Activated CD8-positive, alpha-beta T cell treated with anti-CD3 and anti-CD28 coated beads for 36 hours (primary cell): ENCODE measurements at regions of chr1 and their contacts with region 1.

Region 1: GRCh38 chr1:182301467-182302198 is 90.0 kb downstream of the GLUL start:
- DNase-seq: peak; percentile 52
- ATAC-seq: peak; percentile 47
- H3K4me3 Mint-ChIP-seq: no peak overlapping the region
- H3K27ac Mint-ChIP-seq: peak overlapping the region; percentile 77
- H3K4me1 Mint-ChIP-seq: peaks cover 26% of the 10 kb centered on the region
- H3K27me3 Mint-ChIP-seq: no peaks in the 10 kb centered on the region
- CTCF ChIP-seq: no peak

Region 2: GRCh38 chr1:182268669-182269068 is 33.0 kb before region 1 on chr1:
- CTCF ChIA-PET with region 1: no interaction called
- POLR2A ChIA-PET with region 1: no interaction called
- intact Hi-C with region 1: no loop called
- DNase-seq: no peak
- ATAC-seq: no peak
- H3K4me3 Mint-ChIP-seq: no peak overlapping the region
- H3K27ac Mint-ChIP-seq: no peak overlapping the region
- H3K4me1 Mint-ChIP-seq: peaks cover 4% of the 10 kb centered on the region
- H3K27me3 Mint-ChIP-seq: no peaks in the 10 kb centered on the region
- CTCF ChIP-seq: no peak

Region 3: GRCh38 chr1:182391362-182392044 is 89.9 kb after region 1 on chr1 and contains the start of gene GLUL:
- CTCF ChIA-PET with region 1: interaction called, 10 read pairs
- POLR2A ChIA-PET with region 1: interaction called, 3 read pairs
- intact Hi-C with region 1: no loop called
- DNase-seq: peak; percentile 67
- ATAC-seq: peak; percentile 77
- H3K4me3 Mint-ChIP-seq: peak within 1 kb of the TSS; percentile 78
- H3K27ac Mint-ChIP-seq: peak within 1 kb of the TSS; percentile 77
- H3K4me1 Mint-ChIP-seq: peaks cover 15% of the 10 kb centered on the region
- H3K27me3 Mint-ChIP-seq: peaks cover 24% of the 10 kb centered on the region
- CTCF ChIP-seq: no peak
- total RNA-seq, gene GLUL: 50.6 to 52.8 TPM

Region 4: GRCh38 chr1:182410620-182411273 is 109.1 kb after region 1 on chr1:
- CTCF ChIA-PET with region 1: no interaction called
- POLR2A ChIA-PET with region 1: no interaction called
- intact Hi-C with region 1: no loop called
- DNase-seq: no peak
- ATAC-seq: no peak
- H3K4me3 Mint-ChIP-seq: no peak overlapping the region
- H3K27ac Mint-ChIP-seq: no peak overlapping the region
- H3K4me1 Mint-ChIP-seq: no peaks in the 10 kb centered on the region
- H3K27me3 Mint-ChIP-seq: peaks cover 12% of the 10 kb centered on the region
- CTCF ChIP-seq: no peak